ENCODE measurements at regions of chr5 and their contacts with region 1.

Region 1: DNA sequence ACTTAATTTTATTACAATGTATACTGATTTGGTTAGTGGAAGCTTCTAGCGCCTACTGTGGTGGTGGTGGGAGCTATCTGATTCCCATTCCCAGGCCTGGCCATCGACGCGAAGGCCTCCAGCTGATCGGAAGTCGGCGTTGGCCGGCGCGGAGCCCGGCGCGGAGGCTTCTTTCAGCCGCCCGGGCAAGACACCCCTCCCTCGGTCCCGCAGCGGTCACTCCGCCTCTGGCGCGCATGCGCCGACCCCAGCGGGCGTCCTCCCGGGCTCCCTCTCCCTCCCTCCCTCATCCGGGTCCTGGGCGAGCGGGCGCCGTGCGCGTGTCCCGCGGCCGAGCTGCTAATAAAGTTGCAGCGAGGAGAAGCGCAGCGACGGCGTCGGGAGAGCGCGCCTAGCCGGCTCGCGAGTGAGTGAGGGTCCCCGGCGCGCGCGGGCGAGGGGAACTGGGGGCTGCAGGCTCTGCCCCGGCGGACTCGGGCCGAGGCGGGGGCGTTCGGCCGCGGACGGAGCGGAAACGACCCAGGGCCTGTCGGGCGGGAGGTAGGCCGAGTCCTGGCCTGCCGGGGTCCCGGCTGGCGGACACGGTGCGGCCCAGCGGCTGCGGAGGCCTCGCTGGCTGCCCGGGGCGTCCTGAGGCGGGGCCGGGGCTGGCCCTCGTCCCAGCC is at the start of gene SMAD5:
- DNase-seq: peak; percentile 82 to 97
- H3K4me3 ChIP-seq: peak within 1 kb of the TSS; percentile 76 to 84
- H3K27ac ChIP-seq: peak within 1 kb of the TSS; percentile 96 to 97
- H3K4me1 ChIP-seq: peaks cover 6 to 31% of the 10 kb centered on the region in 2 donors
- H3K27me3 ChIP-seq: no peaks in the 10 kb centered on the region
- CTCF ChIP-seq: no peak
- total RNA-seq, gene SMAD5: 23.8 TPM

Region 2: GRCh38 chr5:136028782-136029742 is 103.6 kb before region 1 on chr5 and contains the start of gene TGFBI:
- intact Hi-C with region 1: loop called (anchors 5 kb)
- DNase-seq: peak in 1 of 2 donors; percentile 79
- H3K4me3 ChIP-seq: peak within 1 kb of the TSS; percentile 60 to 83
- H3K27ac ChIP-seq: peak within 1 kb of the TSS; percentile 60 to 70
- H3K4me1 ChIP-seq: peaks cover 15 to 41% of the 10 kb centered on the region in 2 donors
- H3K27me3 ChIP-seq: no peaks in the 10 kb centered on the region
- CTCF ChIP-seq: peak in 2 of 3 experiments; percentile 21 to 37
- total RNA-seq, gene TGFBI: 174 TPM

Measured in ascending aorta (tissue), 2 donors.